Calu3 (cell line): ENCODE measurements at regions of chr1 and their contacts with region 1.

Region 1: DNA sequence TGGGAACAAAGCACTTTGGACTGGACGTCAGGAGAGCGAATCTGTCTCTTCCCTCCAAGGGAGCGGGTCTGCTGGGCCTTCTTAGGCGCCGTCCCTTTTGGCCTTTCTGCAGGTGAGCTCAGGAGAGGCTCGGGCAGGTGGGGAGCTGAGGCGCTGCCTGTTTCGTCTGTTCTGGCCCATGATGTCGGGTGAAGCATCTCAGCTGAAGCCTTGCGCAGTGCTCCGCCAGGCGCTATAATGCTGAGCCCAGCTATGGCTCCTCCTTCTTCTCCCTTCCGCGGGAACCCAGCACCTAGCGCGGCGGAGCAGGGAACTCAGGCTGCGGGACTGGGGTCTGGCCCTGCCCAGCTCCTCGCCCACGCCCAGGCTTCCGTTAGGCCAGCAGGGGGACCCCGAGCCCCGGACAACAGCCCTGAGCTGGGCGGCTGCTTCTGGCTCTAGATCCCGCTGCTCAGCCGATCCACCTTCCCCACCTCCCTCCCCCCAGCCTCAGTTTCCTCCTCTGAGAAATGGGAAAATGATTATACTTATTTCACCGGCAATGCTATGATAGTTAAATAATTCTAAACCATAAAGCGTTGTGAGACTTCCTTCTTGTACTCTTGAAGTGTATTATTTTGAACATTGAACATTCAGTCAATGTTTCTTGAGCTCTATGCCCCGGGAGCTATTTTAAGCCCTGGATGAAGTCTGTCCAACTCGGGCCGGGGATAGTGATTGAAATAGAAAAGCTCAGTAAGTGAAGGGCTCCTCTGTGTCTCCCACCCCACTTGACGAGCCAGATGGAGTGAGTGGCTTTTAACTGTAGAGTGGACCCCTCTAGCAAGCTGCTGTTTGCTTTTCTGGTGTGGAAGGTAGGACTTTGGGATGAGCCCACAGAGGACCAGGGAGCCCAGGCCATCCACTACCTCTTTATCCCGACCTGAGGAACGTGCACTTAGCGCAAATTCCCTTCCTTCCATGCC is 9.6 kb upstream of the ADORA1 start:
- DNase-seq: peak; percentile 92
- H3K4me3 Mint-ChIP-seq: no peak overlapping the region
- H3K27ac Mint-ChIP-seq: no peak overlapping the region
- H3K4me1 Mint-ChIP-seq: no peaks in the 10 kb centered on the region
- H3K27me3 Mint-ChIP-seq: no peaks in the 10 kb centered on the region
- CTCF ChIP-seq: peak; percentile 91

Region 2: DNA sequence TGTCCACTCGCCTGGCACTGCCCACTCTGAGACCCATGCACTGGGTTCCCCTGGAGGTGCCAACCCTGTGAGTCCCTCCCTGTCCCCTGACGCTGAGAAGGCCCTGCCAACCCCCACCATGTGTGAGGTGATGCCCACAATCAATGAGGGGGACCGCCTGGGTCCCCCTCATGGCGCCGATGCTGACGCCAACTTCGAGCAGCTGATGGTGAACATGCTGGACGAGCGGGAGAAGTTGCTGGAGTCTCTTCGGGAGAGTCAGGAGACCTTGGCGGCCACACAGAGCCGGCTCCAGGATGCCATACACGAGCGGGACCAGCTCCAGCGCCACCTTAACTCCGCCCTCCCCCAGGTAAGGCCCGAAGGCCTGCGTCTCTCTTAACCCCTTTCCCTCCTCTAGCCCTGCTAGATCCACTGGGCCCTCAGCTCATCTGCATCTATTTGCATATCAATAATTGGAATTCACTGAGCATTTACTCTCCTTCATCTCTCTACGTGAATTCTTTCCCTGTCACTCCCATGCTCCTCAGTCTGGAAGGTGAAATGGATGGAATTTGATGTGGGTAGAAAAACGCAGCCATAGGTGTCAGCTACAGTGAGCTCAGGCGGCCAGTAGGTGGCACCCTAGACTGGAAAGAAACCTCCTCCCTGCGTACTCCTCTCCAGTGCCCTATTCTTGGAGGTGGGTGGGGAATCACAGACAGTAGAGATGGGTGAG is 78.8 kb before region 1 on chr1:
- CTCF ChIA-PET with region 1: interaction called, 20 read pairs
- intact Hi-C with region 1: no loop called
- DNase-seq: peak; percentile 83
- H3K4me3 Mint-ChIP-seq: no peak overlapping the region
- H3K27ac Mint-ChIP-seq: no peak overlapping the region
- H3K4me1 Mint-ChIP-seq: no peaks in the 10 kb centered on the region
- H3K27me3 Mint-ChIP-seq: peaks cover 100% of the 10 kb centered on the region
- CTCF ChIP-seq: peak; percentile 91

Region 3: GRCh38 chr1:203084588-203085502 is 33.0 kb before region 1 on chr1:
- CTCF ChIA-PET with region 1: no interaction called
- intact Hi-C with region 1: no loop called
- DNase-seq: peak; percentile 13
- H3K4me3 Mint-ChIP-seq: no peak overlapping the region
- H3K27ac Mint-ChIP-seq: no peak overlapping the region
- H3K4me1 Mint-ChIP-seq: no peaks in the 10 kb centered on the region
- H3K27me3 Mint-ChIP-seq: peaks cover 95% of the 10 kb centered on the region
- CTCF ChIP-seq: no peak

Region 4: DNA sequence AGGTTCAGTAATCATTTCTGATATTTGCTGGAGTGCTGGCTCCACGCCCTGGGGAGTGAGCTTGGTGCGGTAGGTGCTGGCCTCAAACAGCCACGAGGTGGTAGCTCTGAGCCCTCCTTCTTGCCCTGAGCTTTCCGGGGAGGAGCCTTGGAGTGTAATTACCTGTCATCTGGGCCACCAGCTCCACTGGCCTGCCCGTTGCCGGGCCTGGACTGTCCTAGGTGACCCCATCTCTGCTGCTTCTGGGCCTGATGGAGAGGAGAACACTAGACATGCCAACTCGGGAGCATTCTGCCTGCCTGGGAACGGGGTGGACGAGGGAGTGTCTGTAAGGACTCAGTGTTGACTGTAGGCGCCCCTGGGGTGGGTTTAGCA is 48.7 kb after region 1 on chr1:
- CTCF ChIA-PET with region 1: interaction called, 68 read pairs
- intact Hi-C with region 1: no loop called
- DNase-seq: peak; percentile 58
- H3K4me3 Mint-ChIP-seq: no peak overlapping the region
- H3K27ac Mint-ChIP-seq: no peak overlapping the region
- H3K4me1 Mint-ChIP-seq: peaks cover 7% of the 10 kb centered on the region
- H3K27me3 Mint-ChIP-seq: peaks cover 87% of the 10 kb centered on the region
- CTCF ChIP-seq: no peak

Region 5: GRCh38 chr1:203172128-203173010 is 54.5 kb after region 1 on chr1:
- CTCF ChIA-PET with region 1: interaction called, 68 read pairs
- intact Hi-C with region 1: loop called (anchors 1 kb)
- DNase-seq: peak; percentile 91
- H3K4me3 Mint-ChIP-seq: no peak overlapping the region
- H3K27ac Mint-ChIP-seq: no peak overlapping the region
- H3K4me1 Mint-ChIP-seq: no peaks in the 10 kb centered on the region
- H3K27me3 Mint-ChIP-seq: peaks cover 77% of the 10 kb centered on the region
- CTCF ChIP-seq: peak; percentile 97

Region 6: GRCh38 chr1:203216274-203217138 is 98.6 kb after region 1 on chr1:
- CTCF ChIA-PET with region 1: interaction called, 82 read pairs
- intact Hi-C with region 1: loop called (anchors 1 kb)
- DNase-seq: peak; percentile 73
- H3K4me3 Mint-ChIP-seq: no peak overlapping the region
- H3K27ac Mint-ChIP-seq: no peak overlapping the region
- H3K4me1 Mint-ChIP-seq: no peaks in the 10 kb centered on the region
- H3K27me3 Mint-ChIP-seq: peaks cover 100% of the 10 kb centered on the region
- CTCF ChIP-seq: peak; percentile 67

Region 7: GRCh38 chr1:203229471-203230135 is 111.7 kb after region 1 on chr1 and contains the start of gene CHIT1:
- CTCF ChIA-PET with region 1: no interaction called
- intact Hi-C with region 1: no loop called
- DNase-seq: no peak
- H3K4me3 Mint-ChIP-seq: no peak within 1 kb of the TSS
- H3K27ac Mint-ChIP-seq: no peak within 1 kb of the TSS
- H3K4me1 Mint-ChIP-seq: no peaks in the 10 kb centered on the region
- H3K27me3 Mint-ChIP-seq: peaks cover 100% of the 10 kb centered on the region
- CTCF ChIP-seq: no peak
- total RNA-seq, gene CHIT1: not detected in 2 replicates

Region 8: DNA sequence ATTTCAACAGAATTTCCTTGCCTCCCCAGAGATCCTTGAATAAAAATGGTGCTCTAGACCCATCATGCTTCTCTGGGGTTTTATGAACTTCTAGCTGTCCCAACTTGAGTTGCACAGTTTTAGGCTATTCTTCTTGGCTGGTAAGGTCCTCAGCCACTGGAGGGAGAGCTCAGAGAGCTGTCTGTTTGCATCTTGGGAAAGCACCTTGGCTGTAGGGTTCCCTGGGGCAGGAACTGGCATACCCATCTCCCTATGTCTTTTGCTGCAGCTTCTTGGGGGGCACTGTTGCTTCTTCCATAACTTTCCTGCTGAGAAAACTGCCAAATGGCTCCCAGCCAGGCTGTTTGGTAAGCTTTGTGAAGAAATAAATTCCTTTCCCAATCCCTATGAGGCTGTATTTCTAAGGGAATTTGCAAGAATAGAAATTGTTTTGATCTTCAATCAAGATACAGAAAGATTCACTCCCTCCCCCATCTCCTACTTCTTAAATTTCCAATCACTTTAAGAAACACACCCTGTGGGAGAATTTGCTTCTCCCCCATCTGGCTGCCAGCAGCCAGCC is 241.2 kb after region 1 on chr1:
- CTCF ChIA-PET with region 1: no interaction called
- intact Hi-C with region 1: no loop called
- DNase-seq: no peak
- H3K4me3 Mint-ChIP-seq: no peak overlapping the region
- H3K27ac Mint-ChIP-seq: no peak overlapping the region
- H3K4me1 Mint-ChIP-seq: no peaks in the 10 kb centered on the region
- H3K27me3 Mint-ChIP-seq: peaks cover 96% of the 10 kb centered on the region
- CTCF ChIP-seq: no peak

Region 9: GRCh38 chr1:204408074-204408507 is 1290.2 kb after region 1 on chr1:
- CTCF ChIA-PET with region 1: no interaction called
- intact Hi-C with region 1: no loop called
- DNase-seq: peak; percentile 57
- H3K4me3 Mint-ChIP-seq: peak overlapping the region; percentile 96
- H3K27ac Mint-ChIP-seq: peak overlapping the region; percentile 97
- H3K4me1 Mint-ChIP-seq: peaks cover 7% of the 10 kb centered on the region
- H3K27me3 Mint-ChIP-seq: no peaks in the 10 kb centered on the region
- CTCF ChIP-seq: no peak